Right ventricle myocardium superior (tissue), 1 donor: ENCODE measurements at regions of chr17 and their contacts with region 1.

Region 1: GRCh38 chr17:44324571-44325275 is at the start of gene SLC25A39:
- DNase-seq: peak; percentile 97
- ATAC-seq: peak; percentile 93
- total RNA-seq, gene SLC25A39: 45.0 TPM

Region 2: GRCh38 chr17:44176671-44177501 is 147.8 kb before region 1 on chr17:
- intact Hi-C with region 1: no loop called
- DNase-seq: no peak
- ATAC-seq: peak; percentile 6

Region 3: DNA sequence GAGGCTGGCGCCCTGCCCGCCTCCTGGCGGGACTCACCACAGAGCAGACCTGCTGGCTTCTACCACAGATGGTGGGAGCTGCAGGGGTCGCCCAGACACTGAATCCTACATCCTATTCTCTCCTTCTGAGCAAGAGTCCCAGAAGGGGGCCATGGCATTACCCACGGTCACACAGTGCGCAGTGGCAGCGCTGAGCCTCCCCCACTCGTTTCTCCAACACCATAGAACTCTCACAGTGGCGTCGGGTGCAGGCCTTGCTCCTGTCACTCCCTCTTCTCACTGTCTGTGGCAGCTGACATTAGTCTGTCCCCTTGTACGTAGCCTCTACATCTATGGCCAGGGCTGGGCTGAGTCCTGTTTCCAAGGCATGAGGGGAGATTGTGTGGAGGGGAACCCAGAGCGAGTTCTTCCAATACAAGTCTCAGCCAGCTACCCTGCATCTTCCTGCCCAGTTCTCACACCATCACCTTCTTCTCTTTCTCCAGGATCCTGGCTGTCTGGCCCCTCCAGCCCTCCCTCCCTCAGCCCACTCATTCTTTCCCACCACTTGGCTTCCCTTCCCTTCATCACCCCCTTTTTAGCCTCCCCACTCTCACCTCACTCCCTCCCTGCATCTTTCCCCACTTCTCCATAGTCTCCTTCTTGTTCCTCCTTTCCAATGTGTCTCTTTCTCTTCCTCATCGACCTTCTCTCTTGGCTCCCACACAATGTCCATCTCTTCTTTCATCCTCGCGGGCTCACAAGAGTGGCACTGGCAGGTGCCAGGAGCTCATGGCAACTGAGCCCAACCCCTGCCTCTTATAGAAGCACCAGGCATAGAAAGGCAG is 111.1 kb before region 1 on chr17:
- intact Hi-C with region 1: loop called (anchors 2 kb)
- DNase-seq: no peak
- ATAC-seq: no peak